PC-3 (cell line): ENCODE measurements at regions of chr1 and their contacts with region 1.

Region 1: DNA sequence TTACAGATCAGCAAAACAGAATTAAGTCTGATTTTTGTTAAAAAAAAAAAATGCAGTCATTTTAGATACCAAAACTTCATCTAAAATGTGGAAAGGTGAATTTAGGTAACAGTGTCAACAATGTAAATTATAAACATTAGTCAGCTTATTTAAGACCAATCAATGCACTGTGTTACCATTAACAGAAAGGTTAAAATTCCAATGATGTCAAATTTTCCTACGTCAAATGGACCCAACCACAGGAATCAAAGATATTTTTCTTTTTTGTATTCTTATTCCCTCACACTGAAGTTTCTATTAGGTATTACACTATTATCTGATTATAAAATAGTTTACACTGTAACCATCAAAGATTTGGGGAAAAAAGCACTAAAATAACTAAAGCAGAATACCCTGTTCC is 6.5 kb downstream of the ARHGAP29 start:
- DNase-seq: no peak
- ATAC-seq: no peak
- H3K4me3 ChIP-seq: peak overlapping the region; percentile 96
- H3K27ac ChIP-seq: peak overlapping the region; percentile 25
- H3K4me1 ChIP-seq: peaks cover 76% of the 10 kb centered on the region
- H3K27me3 ChIP-seq: no peaks in the 10 kb centered on the region
- CTCF ChIP-seq: no peak

Region 2: GRCh38 chr1:94095112-94095637 is 135.7 kb before region 1 on chr1:
- CTCF ChIA-PET with region 1: no interaction called
- POLR2A ChIA-PET with region 1: no interaction called
- intact Hi-C with region 1: no loop called
- DNase-seq: no peak
- ATAC-seq: no peak
- H3K4me3 ChIP-seq: no peak overlapping the region
- H3K27ac ChIP-seq: no peak overlapping the region
- H3K4me1 ChIP-seq: no peaks in the 10 kb centered on the region
- H3K27me3 ChIP-seq: no peaks in the 10 kb centered on the region
- CTCF ChIP-seq: no peak

Region 3: DNA sequence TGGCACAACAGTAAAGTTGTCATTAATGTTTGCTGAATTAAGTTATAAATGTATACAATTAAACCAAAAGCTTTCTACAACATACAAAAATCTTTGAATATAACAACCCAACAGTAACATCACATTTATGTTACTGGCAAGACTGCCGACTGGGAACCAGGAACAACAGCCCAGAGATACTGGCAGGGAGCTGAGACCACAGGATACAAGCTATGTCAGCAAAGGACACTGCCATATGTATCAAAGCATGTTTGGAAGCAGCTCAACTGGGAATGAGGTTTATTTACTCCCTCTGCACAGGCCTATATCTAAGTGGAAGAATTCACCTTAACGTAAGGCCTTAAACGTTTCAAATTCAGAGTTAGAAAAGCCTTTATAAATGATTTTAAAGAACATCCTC is 44.0 kb before region 1 on chr1:
- CTCF ChIA-PET with region 1: no interaction called
- POLR2A ChIA-PET with region 1: no interaction called
- intact Hi-C with region 1: loop called (anchors 5 kb)
- DNase-seq: no peak
- ATAC-seq: no peak
- H3K4me3 ChIP-seq: no peak overlapping the region
- H3K27ac ChIP-seq: no peak overlapping the region
- H3K4me1 ChIP-seq: 0 out of 2 replicates have a peak, but pooled peaks cover 3% of the 10 kb centered on the region
- H3K27me3 ChIP-seq: no peaks in the 10 kb centered on the region
- CTCF ChIP-seq: no peak

Region 4: GRCh38 chr1:94265906-94266305 is 35.0 kb after region 1 on chr1:
- CTCF ChIA-PET with region 1: no interaction called
- POLR2A ChIA-PET with region 1: no interaction called
- intact Hi-C with region 1: no loop called
- DNase-seq: peak; percentile 47
- ATAC-seq: peak; percentile 23
- H3K4me3 ChIP-seq: no peak overlapping the region
- H3K27ac ChIP-seq: peak overlapping the region; percentile 15; the same call in 1 of the 2 replicates
- H3K4me1 ChIP-seq: peaks cover 35% of the 10 kb centered on the region
- H3K27me3 ChIP-seq: no peaks in the 10 kb centered on the region
- CTCF ChIP-seq: no peak